ENCODE measurements at regions of chr10 and their contacts with region 1.

Region 1: GRCh38 chr10:123800289-123800688 is 91.3 kb downstream of the CPXM2 start:
- DNase-seq: no peak

Region 2: DNA sequence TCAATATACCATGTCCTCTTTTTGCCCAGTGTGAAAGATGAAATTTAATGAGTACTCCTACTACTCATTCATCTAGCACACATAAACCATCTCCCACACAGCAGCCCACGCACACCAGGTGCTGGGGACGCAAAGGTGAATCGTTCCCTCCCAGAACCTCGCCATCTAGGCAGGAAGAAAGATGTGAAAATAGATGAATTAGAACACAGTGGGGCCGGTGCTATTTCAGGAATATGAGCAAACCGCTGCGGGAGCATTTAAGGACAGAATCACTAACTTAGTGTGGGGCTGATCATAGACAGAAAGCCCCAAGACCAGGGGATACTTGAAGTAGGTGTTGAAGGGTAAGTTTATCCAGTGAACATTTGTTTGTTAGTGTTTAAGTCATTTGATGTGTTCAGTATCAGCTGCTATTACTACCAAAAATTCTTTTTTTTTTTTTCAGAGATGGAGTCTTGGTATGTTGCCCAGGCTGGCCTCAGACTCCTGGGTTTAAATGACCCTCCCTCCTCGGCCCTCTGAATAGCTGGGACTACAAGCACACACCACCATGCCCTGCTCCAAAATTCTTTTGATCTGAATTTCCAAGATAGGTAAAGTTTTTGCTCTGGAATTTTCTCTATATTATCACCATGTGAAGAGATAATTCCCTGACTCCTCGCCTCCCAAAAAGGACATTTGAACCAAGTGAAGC is 42.5 kb after region 1 on chr10:
- intact Hi-C with region 1: loop called in 1 of 2 experiments (anchors 1 kb)
- DNase-seq: no peak

Region 3: DNA sequence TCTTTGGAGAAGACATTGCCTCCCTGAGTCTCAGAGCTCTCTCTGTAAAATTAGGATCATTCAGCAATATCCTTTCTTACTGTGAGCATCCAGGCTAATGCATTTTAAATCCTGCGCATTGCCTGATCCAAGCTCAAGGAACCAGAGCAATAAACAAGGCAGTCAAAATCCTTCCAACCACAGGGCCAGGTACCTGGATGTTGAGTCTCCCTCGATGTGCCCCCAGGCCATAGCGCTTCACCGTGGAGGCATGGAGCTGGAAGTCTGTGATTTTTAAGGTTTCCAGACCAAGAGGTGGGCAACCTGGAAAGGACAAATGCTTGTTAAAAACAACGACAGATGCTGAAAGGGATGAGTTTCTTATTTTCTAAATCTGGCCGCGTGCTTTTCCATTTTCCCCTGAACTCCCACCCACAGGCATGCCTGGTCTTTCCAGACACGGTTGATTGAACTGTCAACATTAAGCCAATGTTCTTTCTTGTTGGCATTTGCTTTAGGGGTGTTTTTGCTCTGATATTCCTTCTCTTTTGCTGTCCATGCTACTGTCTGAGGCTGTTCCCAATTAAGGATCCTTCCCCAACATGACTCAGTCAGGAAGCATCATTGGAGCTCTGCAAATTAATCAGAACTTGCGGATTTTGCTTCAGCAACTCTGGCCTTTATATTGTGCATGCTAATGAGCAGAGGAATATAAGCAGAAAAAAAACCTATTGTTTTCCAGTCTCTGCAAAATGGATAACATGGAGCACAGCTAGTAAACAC is 62.3 kb after region 1 on chr10:
- intact Hi-C with region 1: loop called in 1 of 2 experiments (anchors 5 kb)
- DNase-seq: no peak

Region 4: GRCh38 chr10:123885406-123886170 is 85.3 kb after region 1 on chr10:
- intact Hi-C with region 1: no loop called
- DNase-seq: peak; percentile 81